CD4-positive, alpha-beta T cell (primary cell): ENCODE measurements at regions of chr7 and their contacts with region 1.

Region 1: DNA sequence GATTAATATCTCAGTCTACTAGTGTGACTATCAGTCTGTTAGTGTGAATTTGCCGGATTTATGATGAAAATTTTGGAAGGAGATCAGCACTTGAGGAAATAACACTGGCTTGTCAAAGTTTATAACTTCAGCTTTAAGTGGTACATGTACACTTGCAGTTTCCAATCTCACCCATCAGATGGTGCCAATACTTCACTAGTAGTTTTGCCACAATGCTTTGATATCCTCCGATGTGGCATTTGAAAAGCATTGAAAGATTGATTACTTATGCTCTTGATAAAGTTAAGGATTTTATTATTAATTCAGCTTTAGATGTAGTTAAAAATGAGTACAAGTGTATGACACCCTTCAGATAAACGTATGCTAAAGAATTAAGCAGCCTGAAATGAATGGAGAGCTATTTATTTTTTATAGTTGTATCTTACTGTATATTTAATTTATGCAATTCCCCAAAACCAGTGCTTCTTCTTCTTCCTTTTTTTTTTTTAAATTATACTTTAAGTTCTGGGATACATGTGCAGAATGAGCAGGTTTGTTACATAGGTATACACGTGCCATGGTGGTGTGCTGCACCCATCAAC is 98.2 kb downstream of the ANLN start:
- DNase-seq: peak in 8 of 14 experiments; percentile 15 to 80 (median 38)
- ATAC-seq: peak; percentile 83
- H3K4me3 ChIP-seq: no peak overlapping the region
- H3K4me3 Mint-ChIP-seq: no peak overlapping the region
- H3K27ac ChIP-seq: no peak overlapping the region
- H3K27ac Mint-ChIP-seq: no peak overlapping the region
- H3K4me1 ChIP-seq: no peaks in the 10 kb centered on the region
- H3K4me1 Mint-ChIP-seq: no peaks in the 10 kb centered on the region
- H3K27me3 ChIP-seq: no peaks in the 10 kb centered on the region
- H3K27me3 Mint-ChIP-seq: no peaks in the 10 kb centered on the region
- CTCF ChIP-seq: peak; percentile 89

Region 2: GRCh38 chr7:36430186-36430585 is 57.7 kb before region 1 on chr7:
- CTCF ChIA-PET with region 1: no interaction called
- POLR2A ChIA-PET with region 1: no interaction called
- intact Hi-C with region 1: no loop called
- DNase-seq: no peak
- ATAC-seq: no peak
- H3K4me3 ChIP-seq: no peak overlapping the region
- H3K4me3 Mint-ChIP-seq: no peak overlapping the region
- H3K27ac ChIP-seq: no peak overlapping the region
- H3K27ac Mint-ChIP-seq: no peak overlapping the region
- H3K4me1 ChIP-seq: no peaks in the 10 kb centered on the region
- H3K4me1 Mint-ChIP-seq: no peaks in the 10 kb centered on the region
- H3K27me3 ChIP-seq: no peaks in the 10 kb centered on the region
- H3K27me3 Mint-ChIP-seq: no peaks in the 10 kb centered on the region
- CTCF ChIP-seq: no peak

Region 3: GRCh38 chr7:36545291-36545690 is 57.4 kb after region 1 on chr7:
- CTCF ChIA-PET with region 1: no interaction called
- POLR2A ChIA-PET with region 1: no interaction called
- intact Hi-C with region 1: no loop called
- DNase-seq: no peak
- ATAC-seq: no peak
- H3K4me3 ChIP-seq: no peak overlapping the region
- H3K4me3 Mint-ChIP-seq: no peak overlapping the region
- H3K27ac ChIP-seq: no peak overlapping the region
- H3K27ac Mint-ChIP-seq: no peak overlapping the region
- H3K4me1 ChIP-seq: no peaks in the 10 kb centered on the region
- H3K4me1 Mint-ChIP-seq: no peaks in the 10 kb centered on the region
- H3K27me3 ChIP-seq: no peaks in the 10 kb centered on the region
- H3K27me3 Mint-ChIP-seq: no peaks in the 10 kb centered on the region
- CTCF ChIP-seq: no peak

Region 4: GRCh38 chr7:36670585-36671431 is 183.0 kb after region 1 on chr7:
- CTCF ChIA-PET with region 1: interaction called, 14 read pairs
- POLR2A ChIA-PET with region 1: interaction called, 6 read pairs
- intact Hi-C with region 1: loop called (anchors 1 kb)
- DNase-seq: peak; percentile 50 to 89 (median 60)
- ATAC-seq: peak; percentile 99
- H3K4me3 ChIP-seq: no peak overlapping the region
- H3K4me3 Mint-ChIP-seq: no peak overlapping the region
- H3K27ac ChIP-seq: no peak overlapping the region
- H3K27ac Mint-ChIP-seq: no peak overlapping the region
- H3K4me1 ChIP-seq: peaks cover 5% of the 10 kb centered on the region
- H3K4me1 Mint-ChIP-seq: peaks cover 42% of the 10 kb centered on the region
- H3K27me3 ChIP-seq: no peaks in the 10 kb centered on the region
- H3K27me3 Mint-ChIP-seq: no peaks in the 10 kb centered on the region
- CTCF ChIP-seq: peak; percentile 89

Region 5: GRCh38 chr7:36863901-36864701 is 376.3 kb after region 1 on chr7:
- CTCF ChIA-PET with region 1: no interaction called
- POLR2A ChIA-PET with region 1: no interaction called
- intact Hi-C with region 1: loop called in 1 of 2 experiments (anchors 10 kb)
- DNase-seq: peak in 3 of 14 experiments; percentile 5 to 75 (median 16)
- ATAC-seq: no peak
- H3K4me3 ChIP-seq: no peak overlapping the region
- H3K4me3 Mint-ChIP-seq: no peak overlapping the region
- H3K27ac ChIP-seq: no peak overlapping the region
- H3K27ac Mint-ChIP-seq: peak overlapping the region; percentile 3
- H3K4me1 ChIP-seq: peaks cover 7% of the 10 kb centered on the region
- H3K4me1 Mint-ChIP-seq: peaks cover 35% of the 10 kb centered on the region
- H3K27me3 ChIP-seq: no peaks in the 10 kb centered on the region
- H3K27me3 Mint-ChIP-seq: no peaks in the 10 kb centered on the region
- CTCF ChIP-seq: no peak

Region 6: DNA sequence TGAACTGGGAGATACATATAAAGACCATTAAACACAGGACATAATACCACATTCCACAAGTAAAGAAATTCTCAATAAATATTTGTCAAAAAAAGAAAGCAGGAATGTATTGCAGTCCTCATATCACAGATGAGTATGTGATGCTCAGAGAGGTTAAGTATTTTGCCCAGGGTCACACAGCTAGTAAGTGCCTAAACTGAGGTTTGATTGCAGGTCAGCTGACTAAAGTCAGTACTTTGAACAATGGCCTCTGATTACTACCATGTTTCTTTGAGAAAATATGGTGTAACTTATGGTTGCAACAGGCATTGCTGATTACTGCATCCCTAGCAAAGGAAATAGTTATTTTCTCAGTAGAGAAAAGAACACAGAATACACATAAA is 693.7 kb after region 1 on chr7:
- CTCF ChIA-PET with region 1: interaction called, 45 read pairs
- POLR2A ChIA-PET with region 1: interaction called, 8 read pairs
- intact Hi-C with region 1: loop called (anchors 1 kb)
- DNase-seq: no peak
- ATAC-seq: no peak
- H3K4me3 ChIP-seq: no peak overlapping the region
- H3K4me3 Mint-ChIP-seq: no peak overlapping the region
- H3K27ac ChIP-seq: no peak overlapping the region
- H3K27ac Mint-ChIP-seq: no peak overlapping the region
- H3K4me1 ChIP-seq: peaks cover 7% of the 10 kb centered on the region
- H3K4me1 Mint-ChIP-seq: peaks cover 10% of the 10 kb centered on the region
- H3K27me3 ChIP-seq: no peaks in the 10 kb centered on the region
- H3K27me3 Mint-ChIP-seq: no peaks in the 10 kb centered on the region
- CTCF ChIP-seq: no peak

Region 7: DNA sequence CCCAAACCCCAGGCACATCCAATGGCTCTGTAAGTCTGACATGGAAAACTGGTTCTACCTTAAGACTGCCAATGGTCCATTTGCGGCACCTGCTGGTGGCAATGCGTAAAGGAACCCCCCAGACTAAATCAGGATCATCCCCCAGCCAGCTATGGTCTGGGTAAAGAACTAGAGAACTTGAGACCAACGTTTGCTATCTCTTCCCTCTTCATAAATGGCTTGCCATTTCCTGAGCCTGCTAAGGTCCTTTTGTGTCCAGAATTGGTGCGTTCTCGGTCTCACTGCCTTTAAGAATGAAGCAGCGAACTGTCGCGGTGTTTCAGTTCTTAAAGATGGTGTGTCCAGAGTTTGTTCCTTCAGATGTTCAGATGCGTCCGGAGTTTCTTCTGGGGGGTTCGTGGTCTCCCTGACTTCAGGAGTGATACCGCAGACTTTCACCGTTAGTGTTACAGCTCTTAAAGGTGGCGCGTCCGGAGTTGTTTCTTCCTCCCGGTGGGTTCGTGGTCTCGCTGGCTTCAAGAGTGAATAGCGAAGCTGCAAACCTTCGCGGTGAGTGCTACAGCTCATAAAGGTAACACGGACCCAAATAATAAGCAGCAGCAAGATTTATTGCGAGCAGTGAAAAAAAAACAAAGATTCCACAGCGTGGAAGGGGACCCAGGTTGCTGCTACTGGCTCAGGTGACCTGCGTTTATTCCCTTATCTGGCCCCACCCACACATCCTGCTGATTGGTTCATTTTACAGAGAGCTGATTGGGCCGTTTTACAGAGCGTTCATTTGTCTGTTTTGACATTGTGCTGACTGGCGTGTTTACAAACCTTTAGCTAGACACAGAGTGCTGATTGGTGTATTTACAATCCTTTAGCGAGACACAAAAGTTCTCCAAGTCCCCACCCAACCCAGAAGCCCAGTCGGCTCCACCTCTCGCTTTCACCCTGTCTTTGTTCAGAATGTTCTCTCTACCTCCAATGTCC is 865.4 kb after region 1 on chr7:
- CTCF ChIA-PET with region 1: no interaction called
- POLR2A ChIA-PET with region 1: no interaction called
- intact Hi-C with region 1: loop called in 1 of 2 experiments (anchors 5 kb)
- DNase-seq: peak; percentile 50 to 91 (median 66)
- ATAC-seq: peak; percentile 83
- H3K4me3 ChIP-seq: peak overlapping the region; percentile 81
- H3K4me3 Mint-ChIP-seq: peak overlapping the region; percentile 93
- H3K27ac ChIP-seq: peak overlapping the region; percentile 63 to 69
- H3K27ac Mint-ChIP-seq: peak overlapping the region; percentile 90
- H3K4me1 ChIP-seq: peaks cover 59% of the 10 kb centered on the region
- H3K4me1 Mint-ChIP-seq: peaks cover 90% of the 10 kb centered on the region
- H3K27me3 ChIP-seq: no peaks in the 10 kb centered on the region
- H3K27me3 Mint-ChIP-seq: no peaks in the 10 kb centered on the region
- CTCF ChIP-seq: peak; percentile 97